ENCODE measurements at regions of chr2 and their contacts with region 1.

Region 1: GRCh38 chr2:22454826-22455485 is 930.0 kb upstream of the KLHL29 start:
- DNase-seq: no peak

Region 2: GRCh38 chr2:22507854-22508253 is 52.9 kb after region 1 on chr2:
- in situ Hi-C with region 1: loop called (anchors 5 kb)
- DNase-seq: no peak